Activated T-helper 2 cell treated with anti-CD3 and anti-CD28 coated beads, Interferon-gamma antibody, Interleukin-2, Interleukin-4, amounts not matched to agents 10 μg/mL and 5 μg/mL and 100 μg/mL, durations not matched to agents 14 hours and 24 hours and 36 hours (primary cell): ENCODE measurements at regions of chr1 and their contacts with region 1.

Region 1: DNA sequence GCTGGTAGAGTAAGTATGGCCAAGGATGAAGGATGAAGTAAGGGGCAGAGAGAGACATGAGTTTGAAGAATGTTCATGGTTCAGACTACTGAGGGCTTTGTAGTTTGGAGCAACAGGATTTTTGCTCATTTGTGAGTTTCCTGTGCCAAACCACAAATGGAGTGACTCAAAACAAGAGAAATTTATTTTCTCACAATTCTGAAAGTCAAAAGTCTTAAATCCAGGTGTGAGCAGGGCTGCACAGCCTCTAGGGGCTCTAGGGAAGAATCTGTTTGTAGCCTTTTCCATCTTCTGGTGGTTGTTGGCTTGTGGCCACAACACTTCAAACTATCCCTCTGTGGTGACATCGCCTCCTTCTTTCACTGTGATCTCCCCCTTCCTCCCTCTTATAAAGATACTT is 58.9 kb downstream of the RHOU start:
- DNase-seq: peak; percentile 45
- H3K4me3 Mint-ChIP-seq: no peak overlapping the region
- H3K27ac Mint-ChIP-seq: no peak overlapping the region
- H3K4me1 Mint-ChIP-seq: peaks cover 24% of the 10 kb centered on the region
- H3K27me3 Mint-ChIP-seq: no peaks in the 10 kb centered on the region

Region 2: GRCh38 chr1:228734881-228735801 is 59.0 kb before region 1 on chr1 and contains the start of gene RHOU:
- intact Hi-C with region 1: loop called (anchors 5 kb)
- DNase-seq: peak; percentile 58
- H3K4me3 Mint-ChIP-seq: peak within 1 kb of the TSS; percentile 75
- H3K27ac Mint-ChIP-seq: peak within 1 kb of the TSS; percentile 12
- H3K4me1 Mint-ChIP-seq: peaks cover 5% of the 10 kb centered on the region
- H3K27me3 Mint-ChIP-seq: peaks cover 63% of the 10 kb centered on the region
- total RNA-seq, gene RHOU: 0.18 and 0.28 TPM in 2 replicates

Region 3: DNA sequence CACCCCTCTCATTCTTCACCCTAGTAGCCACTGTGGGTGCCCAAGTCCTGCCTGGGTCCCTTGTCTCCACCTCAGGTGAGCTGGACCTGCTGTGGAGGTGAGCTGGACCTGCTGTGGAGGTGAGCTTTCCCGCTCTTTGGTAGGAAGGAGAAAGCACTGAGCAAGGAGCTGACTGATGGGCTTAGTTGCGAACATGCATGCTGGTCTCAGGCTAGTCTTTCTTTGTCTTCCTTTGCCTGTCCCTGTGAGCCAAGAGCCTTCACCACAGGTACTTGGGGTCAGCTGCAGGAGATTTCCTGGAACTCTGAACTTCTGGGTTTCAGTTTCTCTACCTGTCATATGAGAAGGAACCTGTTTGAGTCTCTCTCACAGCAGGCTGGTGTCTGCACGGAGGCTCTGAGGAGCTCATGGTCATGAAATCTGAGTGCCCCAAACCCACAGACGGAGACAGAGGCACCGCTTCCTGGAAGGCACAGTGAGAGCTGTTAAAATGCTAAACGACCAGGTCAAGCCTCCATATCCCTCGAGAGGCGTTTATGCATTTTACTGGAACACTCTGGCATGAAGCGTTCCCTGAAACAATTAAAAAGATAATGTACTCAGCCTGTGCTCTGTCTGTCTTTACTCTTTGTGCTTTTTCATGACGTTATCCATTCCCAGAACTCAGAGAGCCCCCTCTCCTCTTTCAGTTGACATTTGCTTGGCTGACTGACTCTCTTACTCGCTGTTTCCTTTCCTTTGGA is 10.7 kb after region 1 on chr1:
- intact Hi-C with region 1: loop called (anchors 1 kb)
- DNase-seq: peak; percentile 38
- H3K4me3 Mint-ChIP-seq: peak overlapping the region; percentile 20
- H3K27ac Mint-ChIP-seq: peak overlapping the region; percentile 86
- H3K4me1 Mint-ChIP-seq: peaks cover 42% of the 10 kb centered on the region
- H3K27me3 Mint-ChIP-seq: no peaks in the 10 kb centered on the region

Region 4: GRCh38 chr1:228860911-228861831 is 67.0 kb after region 1 on chr1:
- intact Hi-C with region 1: loop called (anchors 1 kb)
- DNase-seq: no peak
- H3K4me3 Mint-ChIP-seq: no peak overlapping the region
- H3K27ac Mint-ChIP-seq: no peak overlapping the region
- H3K4me1 Mint-ChIP-seq: peaks cover 14% of the 10 kb centered on the region
- H3K27me3 Mint-ChIP-seq: peaks cover 25% of the 10 kb centered on the region

Region 5: DNA sequence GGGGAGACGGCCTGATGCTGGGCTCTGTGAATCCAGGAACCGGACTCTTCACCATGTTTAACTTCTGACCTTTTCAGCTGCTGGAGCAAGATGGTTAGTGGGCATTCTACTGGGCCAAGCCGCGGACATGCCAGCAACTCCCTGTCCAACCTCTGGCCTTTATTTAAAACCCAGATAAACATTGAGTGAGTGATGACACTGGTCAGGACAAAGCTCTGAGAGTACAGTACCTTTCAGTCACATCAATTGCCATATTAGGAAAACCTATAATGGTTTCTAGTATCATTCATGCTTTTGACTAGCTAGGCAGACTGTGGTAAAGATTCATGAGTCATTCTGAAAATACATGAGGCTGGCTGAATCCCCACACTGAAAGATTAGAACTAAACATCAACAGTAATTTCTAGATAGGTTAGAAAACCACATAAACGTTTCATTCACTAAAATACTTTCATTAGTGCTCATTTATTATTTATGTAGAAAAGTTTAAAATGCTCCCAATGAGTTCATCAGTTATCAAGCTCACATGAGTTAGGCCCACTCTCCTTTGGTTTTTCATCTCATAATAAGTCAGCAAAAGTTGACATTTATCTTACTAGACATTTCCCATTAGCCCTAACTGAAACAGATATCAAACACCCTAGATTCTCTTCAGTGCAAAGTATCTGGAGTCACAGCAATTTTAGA is 646.8 kb after region 1 on chr1:
- intact Hi-C with region 1: loop called (anchors 2 kb)
- DNase-seq: peak; percentile 28
- H3K4me3 Mint-ChIP-seq: no peak overlapping the region
- H3K27ac Mint-ChIP-seq: peak overlapping the region; percentile 53
- H3K4me1 Mint-ChIP-seq: peaks cover 22% of the 10 kb centered on the region
- H3K27me3 Mint-ChIP-seq: peaks cover 22% of the 10 kb centered on the region

Region 6: GRCh38 chr1:230277201-230278025 is 1483.2 kb after region 1 on chr1:
- intact Hi-C with region 1: no loop called
- DNase-seq: no peak
- H3K4me3 Mint-ChIP-seq: no peak overlapping the region
- H3K27ac Mint-ChIP-seq: peak overlapping the region; percentile 17
- H3K4me1 Mint-ChIP-seq: peaks cover 36% of the 10 kb centered on the region
- H3K27me3 Mint-ChIP-seq: no peaks in the 10 kb centered on the region